ENCODE measurements at regions of chr2 and their contacts with region 1.

Region 1: GRCh38 chr2:31434911-31435310 is 20.4 kb upstream of the XDH start:
- DNase-seq: no peak
- H3K4me3 ChIP-seq: no peak overlapping the region
- H3K27ac ChIP-seq: no peak overlapping the region
- H3K4me1 ChIP-seq: peaks cover 15% of the 10 kb centered on the region
- H3K27me3 ChIP-seq: no peaks in the 10 kb centered on the region
- CTCF ChIP-seq: peak; percentile 49; the same call in 1 of the 2 replicates

Region 2: DNA sequence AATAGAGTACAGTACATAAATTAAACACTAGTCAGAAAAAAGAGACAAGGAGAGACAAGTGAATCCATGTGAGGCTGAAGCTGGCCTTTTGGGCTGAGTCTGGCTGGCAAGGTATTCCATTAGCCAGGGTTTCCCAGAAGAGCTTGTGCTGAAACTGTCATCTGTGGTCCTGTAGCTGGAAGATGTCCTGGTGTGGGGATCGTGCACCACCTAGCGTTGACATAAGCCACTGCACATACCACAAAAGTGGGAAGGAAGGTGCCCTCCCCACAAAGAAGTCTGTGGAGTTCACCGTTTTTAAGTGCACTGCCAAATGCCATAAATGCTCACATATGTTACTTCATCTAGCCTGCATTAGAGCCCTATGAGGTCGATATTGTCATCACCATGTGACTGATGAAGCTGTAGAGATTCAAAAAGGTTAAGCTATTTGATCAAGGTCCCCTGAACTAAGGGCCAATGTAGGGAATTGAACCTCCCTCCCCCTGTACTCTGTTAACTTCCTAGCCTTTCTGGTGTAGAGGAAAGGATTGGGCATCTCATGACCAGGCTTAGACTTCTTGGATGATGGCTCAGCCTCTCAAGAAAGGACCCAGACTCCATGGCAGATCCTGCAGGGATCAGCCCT is 264.7 kb before region 1 on chr2:
- CTCF ChIA-PET with region 1: no interaction called
- POLR2A ChIA-PET with region 1: no interaction called
- intact Hi-C with region 1: loop called (anchors 1 kb)
- DNase-seq: peak; percentile 42 to 53
- H3K4me3 ChIP-seq: no peak overlapping the region
- H3K27ac ChIP-seq: no peak overlapping the region
- H3K4me1 ChIP-seq: no peaks in the 10 kb centered on the region
- H3K27me3 ChIP-seq: no peaks in the 10 kb centered on the region
- CTCF ChIP-seq: peak; percentile 99

Region 3: DNA sequence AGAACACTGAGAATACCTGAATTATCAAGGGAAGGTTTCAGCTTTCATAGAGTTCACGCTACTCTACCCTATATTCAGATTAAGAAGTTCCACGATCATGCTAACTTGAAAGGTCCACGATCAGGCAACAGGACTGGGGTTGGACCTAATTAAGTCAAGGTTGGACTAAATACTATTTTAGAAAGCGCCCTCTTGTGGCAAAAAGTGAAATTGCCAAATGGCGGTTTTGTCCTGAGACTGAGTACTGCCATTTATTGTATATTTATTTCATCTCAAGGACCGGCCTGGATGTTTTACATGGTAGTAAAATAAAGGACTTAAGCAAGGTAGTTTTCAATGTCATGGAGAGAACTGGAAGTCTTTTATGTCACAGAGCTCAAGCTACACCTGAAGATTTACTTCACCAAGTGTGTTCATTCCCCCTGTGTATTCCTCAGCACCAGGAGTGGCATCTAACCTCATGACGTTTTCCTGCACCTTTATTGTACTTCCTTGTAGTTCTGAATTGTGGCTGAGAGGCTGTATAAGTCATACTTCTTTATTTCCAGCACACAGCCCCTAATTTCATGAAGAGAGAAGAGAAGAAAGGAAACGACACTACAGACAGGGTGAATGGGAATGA is 89.1 kb after region 1 on chr2:
- CTCF ChIA-PET with region 1: no interaction called
- POLR2A ChIA-PET with region 1: no interaction called
- intact Hi-C with region 1: loop called (anchors 5 kb)
- DNase-seq: peak; percentile 42 to 45
- H3K4me3 ChIP-seq: no peak overlapping the region
- H3K27ac ChIP-seq: no peak overlapping the region
- H3K4me1 ChIP-seq: no peaks in the 10 kb centered on the region
- H3K27me3 ChIP-seq: no peaks in the 10 kb centered on the region
- CTCF ChIP-seq: peak; percentile 96

Measured in PC-9 (cell line).